Esophagus muscularis mucosa (tissue), 4 donors: ENCODE measurements at regions of chr5 and their contacts with region 1.

Region 1: GRCh38 chr5:168486136-168486879 is at the start of gene RARS1:
- DNase-seq: peak; percentile 98
- H3K4me3 ChIP-seq: peak within 1 kb of the TSS; percentile 70 to 93 (median 84)
- H3K27ac ChIP-seq: peak within 1 kb of the TSS; percentile 72 to 88 (median 79)
- H3K4me1 ChIP-seq: peaks cover 6 to 25% (median 15%) of the 10 kb centered on the region in 4 donors
- H3K27me3 ChIP-seq: peaks cover 0 to 4% (median 0%) of the 10 kb centered on the region in 4 donors
- CTCF ChIP-seq: peak in 2 of 3 experiments; percentile 97 to 98
- EP300 ChIP-seq: no peak
- POLR2A ChIP-seq: peak; percentile 75
- total RNA-seq, gene RARS1: 53.8 to 72.3 (median 60.7) TPM

Region 2: DNA sequence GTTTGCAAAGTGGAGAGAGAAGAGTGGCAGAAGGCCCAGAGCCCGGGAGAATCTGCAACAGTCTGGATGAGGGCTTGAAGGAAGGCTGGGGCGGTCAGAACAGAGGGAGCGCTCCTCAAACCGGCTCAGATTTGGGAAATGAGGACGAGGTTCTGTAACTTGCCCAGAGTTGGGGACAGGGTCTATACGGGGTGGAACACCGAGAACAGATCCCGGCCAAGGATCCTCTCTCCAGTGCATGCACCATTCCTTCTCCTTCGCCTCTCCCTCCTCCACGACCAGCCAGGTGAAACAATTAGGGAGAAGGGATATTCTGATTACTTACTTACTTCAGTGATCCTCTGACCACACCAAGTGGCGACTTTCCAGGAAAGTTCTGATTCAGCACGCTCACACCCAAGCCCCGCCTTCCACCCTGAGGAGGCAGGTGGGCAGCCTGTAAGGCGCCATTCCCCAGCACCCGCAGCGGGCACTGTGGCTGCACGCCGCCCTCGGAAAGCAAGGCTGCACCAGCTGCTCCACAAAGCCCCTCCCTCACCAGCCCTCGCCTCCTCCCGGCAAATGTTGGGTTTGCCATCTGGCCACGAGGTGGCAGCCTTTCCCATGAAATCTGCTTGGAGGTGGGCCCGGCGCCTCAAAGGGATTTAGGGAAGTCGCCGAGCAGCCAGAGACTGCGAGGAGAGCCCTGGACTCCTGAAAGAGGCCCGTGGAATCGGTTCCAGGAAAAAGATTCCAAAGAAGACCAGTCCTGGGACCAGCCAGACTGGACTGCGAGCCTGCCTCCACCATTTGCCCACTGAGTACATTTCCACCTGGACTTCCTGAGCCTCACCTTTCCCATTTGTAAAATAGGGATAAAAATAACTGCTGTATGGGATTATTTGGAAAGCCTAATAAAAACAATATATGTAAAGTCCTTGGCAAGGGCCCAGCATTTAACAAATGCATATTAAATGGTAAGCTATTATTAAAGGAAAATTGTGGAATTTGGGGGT is 217.1 kb before region 1 on chr5:
- intact Hi-C with region 1: loop called (anchors 5 kb)
- DNase-seq: peak; percentile 95
- H3K4me3 ChIP-seq: peak overlapping the region; percentile 44 to 56 (median 48)
- H3K27ac ChIP-seq: peak overlapping the region in 3 of 4 donors; percentile 20 to 33 (median 31)
- H3K4me1 ChIP-seq: peaks cover 13 to 16% (median 14%) of the 10 kb centered on the region in 4 donors
- H3K27me3 ChIP-seq: no peaks in the 10 kb centered on the region
- CTCF ChIP-seq: peak; percentile 77 to 91 (median 78)
- EP300 ChIP-seq: no peak
- POLR2A ChIP-seq: no peak

Region 3: DNA sequence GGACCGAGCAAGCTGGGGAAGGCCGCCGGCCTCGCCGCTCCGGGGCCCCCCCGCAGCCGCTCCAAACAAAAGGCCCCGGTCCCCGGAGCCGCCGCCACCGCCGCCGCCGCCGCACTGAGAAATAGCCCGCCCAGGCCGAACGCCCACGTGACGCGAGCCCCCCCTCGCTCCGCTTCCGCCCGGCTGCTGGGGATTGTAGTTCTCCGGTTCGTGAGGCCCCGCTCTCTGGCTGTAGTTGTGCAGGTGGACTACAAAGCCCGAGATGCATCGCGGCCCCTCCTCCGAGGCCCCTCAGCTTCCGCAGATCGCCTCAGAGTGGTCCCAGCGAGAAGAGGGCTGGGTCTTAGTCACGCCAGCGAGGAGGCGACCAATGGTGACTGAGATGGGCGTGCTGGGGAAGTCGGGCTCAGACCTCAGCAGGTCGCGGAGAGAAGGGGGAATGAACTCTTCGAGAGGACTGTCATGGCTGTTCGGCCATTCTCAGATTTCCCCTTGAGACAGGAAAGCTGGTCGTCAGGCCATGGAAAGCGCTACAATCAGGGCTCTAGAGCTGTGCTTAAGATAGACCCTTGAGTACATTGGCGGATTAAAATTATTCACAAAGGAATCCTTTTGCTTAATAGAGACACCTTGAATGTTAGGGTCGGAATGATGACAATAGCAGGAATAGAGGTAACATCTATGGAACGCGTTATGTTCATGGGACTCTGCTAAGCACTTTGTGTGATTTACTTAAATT is 93.3 kb after region 1 on chr5:
- intact Hi-C with region 1: loop called (anchors 5 kb)
- DNase-seq: peak; percentile 99
- H3K4me3 ChIP-seq: peak overlapping the region; percentile 91 to 98 (median 94)
- H3K27ac ChIP-seq: peak overlapping the region; percentile 96 to 98 (median 97)
- H3K4me1 ChIP-seq: peaks cover 24 to 43% (median 31%) of the 10 kb centered on the region in 4 donors
- H3K27me3 ChIP-seq: no peaks in the 10 kb centered on the region
- CTCF ChIP-seq: no peak
- EP300 ChIP-seq: no peak
- POLR2A ChIP-seq: peak; percentile 23